A673 (cell line): ENCODE measurements at regions of chr20 and their contacts with region 1.

Region 1: DNA sequence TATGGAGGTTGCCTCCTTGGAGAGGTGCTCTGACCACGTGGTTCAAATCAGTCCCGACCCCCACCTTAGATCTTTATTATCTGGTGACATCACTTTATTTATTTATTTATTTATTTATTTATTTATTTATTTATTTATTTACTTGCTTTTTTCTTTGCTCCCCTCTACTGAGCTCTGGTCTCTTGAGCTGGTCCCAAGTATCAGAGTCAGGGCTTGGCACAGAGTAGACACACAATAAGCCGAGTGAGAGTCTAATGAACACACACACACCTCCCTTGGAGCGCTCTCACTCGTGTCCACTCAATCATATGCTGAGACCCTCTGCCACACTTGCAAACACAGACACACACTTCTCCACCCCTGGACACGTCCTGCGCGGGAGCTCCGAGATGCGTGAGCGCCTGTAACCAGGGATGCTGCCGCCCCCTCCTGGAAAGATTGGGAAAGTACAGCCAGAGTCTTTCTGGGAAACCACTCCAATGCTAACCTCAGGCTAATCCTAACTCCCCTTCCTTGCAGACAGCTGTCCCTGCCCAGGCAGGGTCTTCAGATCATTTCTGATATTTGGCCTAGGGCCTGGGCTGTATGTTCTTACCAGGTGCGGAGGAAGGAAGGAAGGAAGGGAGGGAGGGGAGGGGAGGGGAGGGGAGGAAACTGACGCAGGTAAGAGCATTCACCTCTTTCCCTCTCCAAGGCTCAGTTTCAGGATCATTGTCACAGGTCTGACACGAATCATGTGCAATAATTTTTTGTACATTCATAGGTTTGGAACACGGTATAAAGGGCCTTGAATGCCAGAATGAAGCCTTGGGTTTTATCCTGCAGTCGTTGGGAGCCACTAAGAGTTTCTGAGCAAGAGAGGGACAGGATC is 70.9 kb downstream of the STK35 start:
- DNase-seq: peak; percentile 72
- H3K4me3 ChIP-seq: no peak overlapping the region
- H3K27ac ChIP-seq: no peak overlapping the region
- H3K4me1 ChIP-seq: no peaks in the 10 kb centered on the region
- H3K27me3 ChIP-seq: no peaks in the 10 kb centered on the region
- CTCF ChIP-seq: peak; percentile 93

Region 2: DNA sequence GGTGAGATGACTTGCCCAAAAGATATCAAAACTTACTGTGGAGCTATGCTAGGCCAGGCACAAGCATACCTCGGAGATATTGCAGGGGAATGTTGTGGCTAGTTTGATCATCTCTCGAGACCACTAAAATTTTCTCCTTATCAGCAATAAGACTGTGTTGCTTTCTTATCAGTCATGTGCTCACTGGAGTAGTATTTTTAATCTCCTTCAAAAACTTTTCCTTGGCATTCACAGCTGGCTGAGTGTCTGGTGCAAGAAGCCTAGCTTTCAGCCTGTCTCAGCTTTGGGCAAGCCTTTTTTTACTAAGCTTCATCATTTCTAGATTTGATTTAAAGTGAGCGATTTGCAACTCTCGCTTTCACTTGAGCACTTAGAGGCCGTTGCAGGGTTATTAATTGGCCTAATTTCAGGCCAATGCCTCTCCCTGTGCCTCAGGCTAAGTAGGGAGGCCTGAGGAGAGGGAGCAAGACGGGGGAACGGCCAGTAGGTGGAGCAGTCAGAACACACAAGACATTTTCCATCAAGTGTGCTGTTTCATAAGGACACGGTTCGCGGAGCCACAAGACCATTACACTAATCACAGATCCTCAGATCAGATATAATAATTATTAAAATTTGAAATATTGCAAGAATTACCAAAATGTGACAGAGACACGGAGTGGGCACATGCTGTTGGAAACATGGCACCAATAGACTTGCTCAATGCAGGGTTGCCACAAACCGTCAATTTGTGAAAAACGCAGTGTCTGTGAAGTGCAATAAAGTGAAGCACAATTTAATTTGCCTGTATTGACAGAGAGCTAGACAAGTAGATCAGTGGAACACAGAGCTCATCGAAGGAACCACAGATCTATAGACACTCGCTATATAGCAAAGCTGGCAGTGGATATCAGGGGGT is 408.2 kb before region 1 on chr20:
- CTCF ChIA-PET with region 1: interaction called, 9 read pairs
- POLR2A ChIA-PET with region 1: no interaction called
- intact Hi-C with region 1: loop called (anchors 2 kb)
- DNase-seq: peak; percentile 85
- H3K4me3 ChIP-seq: peak overlapping the region; percentile 14
- H3K27ac ChIP-seq: no peak overlapping the region
- H3K4me1 ChIP-seq: no peaks in the 10 kb centered on the region
- H3K27me3 ChIP-seq: no peaks in the 10 kb centered on the region
- CTCF ChIP-seq: peak; percentile 84

Region 3: DNA sequence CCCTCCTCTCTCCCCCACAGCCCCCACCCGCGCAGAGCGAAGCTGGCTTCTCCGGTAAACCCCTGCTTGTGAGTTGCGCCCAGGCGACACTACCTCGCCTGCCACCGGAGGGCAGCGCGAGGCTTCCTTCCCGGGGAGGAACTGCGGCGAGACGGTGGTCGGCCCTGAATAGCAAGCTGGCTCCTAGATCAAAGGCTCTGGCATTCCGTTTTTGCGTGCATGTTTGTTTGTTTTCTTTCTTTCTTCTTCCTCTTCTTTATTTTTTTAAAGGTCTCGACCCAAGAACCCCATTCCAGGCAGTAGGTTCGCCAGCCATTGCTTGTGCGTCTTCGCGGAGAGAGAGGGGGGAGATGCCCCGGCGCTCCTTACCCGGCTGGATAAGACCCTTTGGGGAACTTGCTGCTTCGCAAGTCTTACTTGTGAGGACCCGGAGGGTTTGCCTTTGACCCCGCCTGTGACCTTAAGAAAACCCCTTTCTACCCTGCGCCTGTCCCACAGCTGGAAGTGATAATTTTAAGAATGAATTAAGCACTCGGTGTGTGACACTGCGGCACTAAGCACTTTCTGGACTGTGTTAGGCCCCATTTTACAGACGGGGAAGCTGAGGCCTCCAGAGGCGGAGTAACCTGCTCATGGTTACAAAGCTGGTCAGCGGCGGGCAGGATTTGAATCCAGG is 370.0 kb before region 1 on chr20:
- CTCF ChIA-PET with region 1: interaction called, 7 read pairs
- POLR2A ChIA-PET with region 1: no interaction called
- intact Hi-C with region 1: loop called (anchors 10 kb)
- DNase-seq: peak; percentile 90
- H3K4me3 ChIP-seq: peak overlapping the region; percentile 62
- H3K27ac ChIP-seq: peak overlapping the region; percentile 85
- H3K4me1 ChIP-seq: peaks cover 45% of the 10 kb centered on the region
- H3K27me3 ChIP-seq: no peaks in the 10 kb centered on the region
- CTCF ChIP-seq: peak; percentile 87

Region 4: DNA sequence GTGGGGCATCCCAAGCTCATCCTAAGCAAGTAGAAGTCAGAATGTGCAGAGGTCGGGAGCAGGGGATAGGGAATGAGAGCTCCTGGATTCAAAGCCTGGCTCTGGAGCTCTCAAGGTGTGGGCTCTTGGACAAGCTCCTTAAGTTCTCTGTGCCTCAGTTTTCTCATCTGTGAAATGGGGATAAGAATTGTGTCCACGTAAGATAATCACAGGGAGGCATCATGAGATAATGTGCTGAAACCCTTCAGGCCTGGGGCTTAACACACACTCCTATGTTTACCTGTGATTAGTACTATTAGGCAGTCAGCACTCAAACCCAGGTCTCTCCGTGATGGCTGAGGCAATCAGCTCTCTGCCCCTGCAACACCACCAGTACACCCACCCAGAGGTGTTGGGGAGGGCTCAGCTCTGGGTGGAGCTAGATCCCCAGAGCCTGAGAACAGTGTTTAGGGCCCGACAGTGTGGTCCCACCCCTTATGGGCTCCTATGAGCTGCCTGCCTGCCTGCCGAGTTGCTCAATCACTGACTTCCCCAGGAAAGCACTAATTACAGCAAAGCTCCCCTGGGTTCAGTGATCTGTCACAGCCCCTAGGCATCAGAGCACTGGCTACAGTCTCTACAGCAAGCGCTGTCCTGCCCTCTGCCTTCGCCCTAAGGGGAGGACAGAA is 283.6 kb before region 1 on chr20:
- CTCF ChIA-PET with region 1: no interaction called
- POLR2A ChIA-PET with region 1: no interaction called
- intact Hi-C with region 1: loop called (anchors 5 kb)
- DNase-seq: peak; percentile 94
- H3K4me3 ChIP-seq: no peak overlapping the region
- H3K27ac ChIP-seq: peak overlapping the region; percentile 74
- H3K4me1 ChIP-seq: peaks cover 62% of the 10 kb centered on the region
- H3K27me3 ChIP-seq: no peaks in the 10 kb centered on the region
- CTCF ChIP-seq: no peak

Region 5: DNA sequence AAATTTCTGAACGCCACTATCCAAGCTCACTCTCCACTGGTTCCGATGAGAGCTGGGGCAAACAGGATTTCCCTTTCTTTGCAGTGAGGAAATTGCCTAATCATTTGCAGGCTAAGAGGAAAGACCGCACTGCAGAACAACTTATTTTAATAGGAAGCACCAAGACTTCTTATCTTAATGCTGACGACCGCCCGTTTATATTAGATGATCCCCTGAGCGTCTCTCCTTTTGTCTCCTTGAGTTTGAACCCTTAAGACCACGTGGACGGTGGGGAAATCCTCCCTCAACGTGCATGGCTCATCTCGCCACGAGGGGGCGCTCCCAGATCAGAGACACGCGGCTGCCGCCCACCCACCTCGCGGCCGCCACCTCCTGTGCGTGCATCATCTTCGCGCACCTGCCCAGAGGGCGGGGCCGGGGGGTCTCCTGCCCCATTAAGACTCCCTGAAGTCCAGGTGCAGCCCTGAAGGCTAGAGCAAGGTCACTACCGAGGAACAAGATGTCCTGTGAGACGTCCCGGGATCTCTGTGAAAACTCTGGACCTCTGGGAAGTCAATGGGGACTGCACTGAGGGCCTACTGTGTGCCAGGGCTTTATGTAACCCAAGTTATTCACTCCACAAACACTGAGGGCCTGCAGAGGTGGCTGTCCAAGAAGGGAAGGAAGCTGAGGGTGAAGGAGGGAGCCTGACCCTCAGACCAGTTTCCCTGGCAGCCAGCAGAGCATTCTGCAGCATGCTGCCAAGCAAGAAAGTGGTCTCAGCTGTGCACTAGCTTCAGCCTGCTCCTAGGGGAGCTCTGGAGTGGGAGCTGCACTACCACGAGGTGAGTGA is 206.8 kb before region 1 on chr20:
- CTCF ChIA-PET with region 1: interaction called, 6 read pairs
- POLR2A ChIA-PET with region 1: no interaction called
- intact Hi-C with region 1: loop called (anchors 1 kb)
- DNase-seq: peak; percentile 90
- H3K4me3 ChIP-seq: no peak overlapping the region
- H3K27ac ChIP-seq: peak overlapping the region; percentile 42
- H3K4me1 ChIP-seq: peaks cover 24% of the 10 kb centered on the region
- H3K27me3 ChIP-seq: no peaks in the 10 kb centered on the region
- CTCF ChIP-seq: peak; percentile 99

Region 6: GRCh38 chr20:1993986-1994385 is 178.6 kb before region 1 on chr20 and contains the start of gene PDYN:
- CTCF ChIA-PET with region 1: no interaction called
- POLR2A ChIA-PET with region 1: no interaction called
- intact Hi-C with region 1: no loop called
- DNase-seq: no peak
- H3K4me3 ChIP-seq: no peak within 1 kb of the TSS
- H3K27ac ChIP-seq: no peak within 1 kb of the TSS
- H3K4me1 ChIP-seq: no peaks in the 10 kb centered on the region
- H3K27me3 ChIP-seq: peaks cover 48% of the 10 kb centered on the region
- CTCF ChIP-seq: no peak
- total RNA-seq, gene PDYN: not detected in 2 replicates

Region 7: GRCh38 chr20:2005831-2006426 is 166.6 kb before region 1 on chr20:
- CTCF ChIA-PET with region 1: interaction called, 10 read pairs
- POLR2A ChIA-PET with region 1: no interaction called
- intact Hi-C with region 1: loop called (anchors 1 kb)
- DNase-seq: peak; percentile 76
- H3K4me3 ChIP-seq: no peak overlapping the region
- H3K27ac ChIP-seq: no peak overlapping the region
- H3K4me1 ChIP-seq: no peaks in the 10 kb centered on the region
- H3K27me3 ChIP-seq: peaks cover 23% of the 10 kb centered on the region
- CTCF ChIP-seq: no peak

Region 8: DNA sequence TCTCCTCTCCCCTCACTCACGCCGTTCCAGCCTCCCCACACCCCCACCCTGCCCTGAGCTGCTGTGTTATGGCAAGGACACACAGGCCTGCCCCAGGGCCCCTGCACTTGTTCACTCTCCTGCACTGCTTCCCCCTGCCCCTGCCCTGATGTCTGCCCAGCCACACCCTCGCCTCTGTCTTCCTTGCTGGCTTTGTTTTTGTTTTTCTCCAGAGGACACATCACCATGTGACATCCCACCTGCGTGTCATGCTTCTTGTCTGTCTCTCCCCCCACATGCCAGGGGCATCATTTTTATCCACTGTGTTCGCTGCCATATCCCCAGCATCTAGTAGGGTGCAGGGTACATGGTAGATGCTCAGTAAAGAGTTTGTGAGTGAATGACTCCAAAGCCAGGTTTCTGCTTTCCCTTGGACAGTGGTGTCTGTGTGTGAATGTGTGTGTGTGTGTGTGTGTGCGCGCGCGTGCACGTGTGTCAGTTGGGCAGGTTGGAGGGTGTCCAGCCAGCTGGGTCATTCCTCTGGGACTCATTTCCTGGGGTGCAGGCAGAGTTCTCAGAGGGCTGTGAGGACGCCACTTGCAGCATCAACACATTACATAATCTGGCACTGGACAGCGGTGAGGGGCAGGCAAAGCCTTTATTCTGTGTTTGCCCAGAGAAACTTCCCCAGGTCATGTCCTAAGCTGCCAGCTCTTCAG is 10.3 kb before region 1 on chr20:
- CTCF ChIA-PET with region 1: interaction called, 7 read pairs
- POLR2A ChIA-PET with region 1: interaction called, 11 read pairs
- intact Hi-C with region 1: no loop called
- DNase-seq: no peak
- H3K4me3 ChIP-seq: no peak overlapping the region
- H3K27ac ChIP-seq: no peak overlapping the region
- H3K4me1 ChIP-seq: no peaks in the 10 kb centered on the region
- H3K27me3 ChIP-seq: no peaks in the 10 kb centered on the region
- CTCF ChIP-seq: no peak

Region 9: GRCh38 chr20:2197166-2197565 is 24.6 kb after region 1 on chr20:
- CTCF ChIA-PET with region 1: no interaction called
- POLR2A ChIA-PET with region 1: no interaction called
- intact Hi-C with region 1: no loop called
- DNase-seq: no peak
- H3K4me3 ChIP-seq: no peak overlapping the region
- H3K27ac ChIP-seq: no peak overlapping the region
- H3K4me1 ChIP-seq: no peaks in the 10 kb centered on the region
- H3K27me3 ChIP-seq: no peaks in the 10 kb centered on the region
- CTCF ChIP-seq: no peak

Region 10: GRCh38 chr20:2305946-2306345 is 133.4 kb after region 1 on chr20:
- CTCF ChIA-PET with region 1: no interaction called
- POLR2A ChIA-PET with region 1: no interaction called
- intact Hi-C with region 1: no loop called
- DNase-seq: no peak
- H3K4me3 ChIP-seq: no peak overlapping the region
- H3K27ac ChIP-seq: no peak overlapping the region
- H3K4me1 ChIP-seq: no peaks in the 10 kb centered on the region
- H3K27me3 ChIP-seq: no peaks in the 10 kb centered on the region
- CTCF ChIP-seq: no peak